Vagina (tissue), 2 donors: ENCODE measurements at regions of chr7 and their contacts with region 1.

Region 1: DNA sequence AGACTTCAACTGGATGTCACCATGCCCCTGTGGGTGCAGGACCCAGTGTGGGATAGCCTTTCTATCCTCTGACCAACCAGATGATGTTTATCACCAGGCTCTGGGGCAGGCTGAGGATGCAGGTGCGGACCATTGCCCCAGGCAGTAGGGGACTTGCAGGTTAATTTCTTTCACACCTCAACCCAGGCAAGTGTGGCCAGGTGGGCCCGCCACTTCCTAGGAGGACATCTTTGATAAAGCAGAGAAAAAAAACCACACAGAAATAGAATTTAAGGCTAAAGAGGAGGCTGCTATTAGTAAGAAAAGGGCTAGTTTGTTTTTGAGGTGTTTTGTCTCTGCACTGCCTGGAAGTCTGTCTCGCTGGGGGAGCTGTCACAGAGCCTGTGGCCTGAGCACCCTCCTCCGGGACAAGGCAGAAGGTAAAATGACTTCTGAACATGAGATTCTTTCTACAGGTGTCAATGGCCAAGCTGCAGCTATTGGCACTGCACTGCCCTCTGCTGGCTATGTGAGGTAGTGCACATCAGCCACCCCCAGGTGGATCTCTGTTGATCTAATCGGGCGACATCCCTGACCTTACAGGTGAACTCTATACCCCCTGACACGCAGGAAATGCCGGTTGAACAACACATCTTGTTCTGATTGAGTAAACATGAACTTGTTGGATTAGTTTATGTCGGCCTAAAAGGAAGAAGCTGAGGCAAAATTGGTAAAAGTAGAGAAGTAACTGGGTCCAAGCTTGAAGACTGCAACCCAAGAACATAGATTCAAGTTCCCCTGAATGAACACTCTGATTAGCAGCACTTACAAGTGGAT is 21.0 kb downstream of the UPP1 start:
- DNase-seq: no peak
- H3K4me3 ChIP-seq: no peak overlapping the region
- H3K27ac ChIP-seq: no peak overlapping the region
- H3K4me1 ChIP-seq: no peaks in the 10 kb centered on the region
- H3K27me3 ChIP-seq: no peaks in the 10 kb centered on the region
- CTCF ChIP-seq: peak; percentile 98 to 99 (median 98)
- POLR2A ChIP-seq: no peak

Region 2: DNA sequence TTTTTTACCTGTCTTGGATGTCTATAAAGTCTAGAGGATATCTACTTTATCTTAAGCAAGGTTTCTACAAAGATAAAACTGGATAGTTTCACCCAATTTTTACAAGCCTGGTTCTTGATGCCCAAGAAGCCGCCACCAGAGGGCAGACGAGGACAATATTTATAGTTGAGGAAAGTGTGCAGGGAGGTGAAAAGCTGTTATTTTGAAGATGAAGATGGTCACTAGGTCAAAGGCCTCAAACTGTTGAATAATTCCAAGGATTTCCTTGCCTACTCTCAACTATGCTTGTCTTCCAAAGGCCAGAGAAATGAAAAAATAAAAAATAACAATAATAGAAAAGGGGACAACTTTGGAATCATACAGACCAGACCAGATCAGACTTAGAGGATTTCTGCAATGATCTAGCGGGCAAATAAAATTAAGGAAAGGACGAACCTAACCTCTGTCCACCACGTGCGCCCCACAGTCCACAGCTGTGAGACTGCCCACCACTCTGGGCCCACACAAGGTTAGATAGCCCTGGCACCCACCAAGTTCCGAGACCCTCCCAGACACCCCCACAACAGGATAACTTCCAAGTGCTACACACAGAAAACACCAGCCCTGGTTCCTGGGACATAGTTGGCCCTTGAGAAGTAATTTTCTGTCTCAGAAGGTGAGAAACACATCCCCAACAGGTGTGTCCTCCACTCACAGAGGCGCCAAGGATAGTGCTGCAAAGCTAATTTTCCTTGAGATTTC is 164.6 kb before region 1 on chr7:
- intact Hi-C with region 1: loop called (anchors 5 kb)
- DNase-seq: peak; percentile 25 to 74
- H3K4me3 ChIP-seq: no peak overlapping the region
- H3K27ac ChIP-seq: no peak overlapping the region
- H3K4me1 ChIP-seq: peaks cover 11% of the 10 kb centered on the region
- H3K27me3 ChIP-seq: no peaks in the 10 kb centered on the region
- CTCF ChIP-seq: peak; percentile 53 to 81 (median 80)
- POLR2A ChIP-seq: no peak

Region 3: GRCh38 chr7:47991741-47992311 is 118.2 kb before region 1 on chr7:
- intact Hi-C with region 1: loop called (anchors 5 kb)
- DNase-seq: peak in 1 of 2 donors; percentile 90
- H3K4me3 ChIP-seq: peak overlapping the region; percentile 49 to 52
- H3K27ac ChIP-seq: peak overlapping the region; percentile 54
- H3K4me1 ChIP-seq: no peaks in the 10 kb centered on the region
- H3K27me3 ChIP-seq: no peaks in the 10 kb centered on the region
- CTCF ChIP-seq: peak; percentile 35 to 67 (median 57)
- POLR2A ChIP-seq: no peak

Region 4: GRCh38 chr7:48041653-48041970 is 68.4 kb before region 1 on chr7:
- intact Hi-C with region 1: loop called (anchors 10 kb)
- DNase-seq: no peak
- H3K4me3 ChIP-seq: no peak overlapping the region
- H3K27ac ChIP-seq: no peak overlapping the region
- H3K4me1 ChIP-seq: no peaks in the 10 kb centered on the region
- H3K27me3 ChIP-seq: no peaks in the 10 kb centered on the region
- CTCF ChIP-seq: no peak
- POLR2A ChIP-seq: no peak

Region 5: GRCh38 chr7:48130658-48131108 is 20.6 kb after region 1 on chr7:
- intact Hi-C with region 1: no loop called
- DNase-seq: no peak
- H3K4me3 ChIP-seq: no peak overlapping the region
- H3K27ac ChIP-seq: no peak overlapping the region
- H3K4me1 ChIP-seq: no peaks in the 10 kb centered on the region
- H3K27me3 ChIP-seq: no peaks in the 10 kb centered on the region
- CTCF ChIP-seq: no peak
- POLR2A ChIP-seq: no peak